ENCODE measurements at regions of chrX and their contacts with region 1.

Region 1: GRCh38 chrX:130339408-130340222 is at the start of gene SLC25A14:
- DNase-seq: peak; percentile 91
- H3K4me3 ChIP-seq: peak within 1 kb of the TSS; percentile 69 to 76 (median 70)
- H3K27ac ChIP-seq: peak within 1 kb of the TSS; percentile 45 to 70 (median 58)
- H3K4me1 ChIP-seq: peaks cover 0 to 14% (median 9%) of the 10 kb centered on the region in 4 donors
- H3K27me3 ChIP-seq: no peaks in the 10 kb centered on the region
- CTCF ChIP-seq: no peak
- EP300 ChIP-seq: no peak
- POLR2A ChIP-seq: no peak
- total RNA-seq, gene SLC25A14: 4.0 to 9.6 (median 6.9) TPM

Region 2: GRCh38 chrX:130268500-130269170 is 71.0 kb before region 1 on chrX and contains the start of gene ZNF280C:
- intact Hi-C with region 1: loop called (anchors 5 kb)
- DNase-seq: peak; percentile 94
- H3K4me3 ChIP-seq: peak within 1 kb of the TSS; percentile 63 to 71 (median 68)
- H3K27ac ChIP-seq: peak within 1 kb of the TSS; percentile 78 to 85 (median 82)
- H3K4me1 ChIP-seq: peaks cover 0 to 17% (median 10%) of the 10 kb centered on the region in 4 donors
- H3K27me3 ChIP-seq: no peaks in the 10 kb centered on the region
- CTCF ChIP-seq: peak in 2 of 3 experiments; percentile 8 to 21
- EP300 ChIP-seq: no peak
- POLR2A ChIP-seq: no peak
- total RNA-seq, gene ZNF280C: 2.5 to 4.1 (median 3.4) TPM